Mammary epithelial cell (primary cell): ENCODE measurements at regions of chr4 and their contacts with region 1.

Region 1: DNA sequence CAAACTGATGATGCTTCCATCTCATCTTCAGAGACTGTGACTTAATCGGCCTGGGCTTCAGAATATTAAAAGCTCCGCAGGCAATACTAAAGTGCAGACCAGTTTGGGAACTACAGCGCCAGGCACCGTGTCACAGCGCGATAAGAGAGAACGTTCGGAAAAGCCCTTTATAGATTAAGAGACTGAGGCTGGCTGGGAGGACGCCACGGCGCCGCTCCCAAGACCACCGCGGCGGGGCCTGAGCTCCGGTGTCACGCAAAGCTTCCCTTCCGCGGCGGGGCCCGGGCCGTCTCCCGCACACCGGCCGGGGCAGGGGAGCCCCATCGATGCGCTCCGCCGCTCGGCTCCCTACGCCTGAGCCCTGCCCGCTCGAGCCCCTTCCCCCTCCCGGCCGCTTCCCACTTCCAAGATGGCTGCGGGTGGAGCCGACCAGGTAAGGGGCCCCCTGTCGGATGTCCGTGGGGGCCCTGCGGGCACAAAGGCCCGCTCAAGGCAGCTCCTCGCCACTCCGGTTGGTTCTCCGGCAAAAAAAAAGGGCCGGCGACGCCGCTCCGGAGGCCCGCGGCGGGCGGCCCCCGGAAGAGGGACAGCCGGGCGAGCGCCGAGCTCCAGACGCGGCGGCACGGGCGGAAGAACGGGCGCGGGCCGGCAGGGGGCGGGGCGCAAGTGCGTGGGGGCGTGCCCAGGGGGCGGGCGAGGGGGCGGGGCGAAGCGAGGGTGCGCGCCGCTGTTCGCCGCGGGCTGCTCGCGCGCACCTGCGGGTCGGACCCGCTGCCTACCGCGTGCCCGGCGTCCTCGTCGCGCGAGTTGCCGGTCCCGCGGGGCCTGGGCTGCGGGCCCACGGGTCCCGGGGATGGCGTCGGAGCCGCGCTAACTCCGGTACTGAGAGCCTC is at the start of gene TBC1D14:
- DNase-seq: peak; percentile 81
- H3K4me3 ChIP-seq: peak within 1 kb of the TSS; percentile 61 to 94 (median 77)
- H3K27ac ChIP-seq: peak within 1 kb of the TSS; percentile 89
- H3K4me1 ChIP-seq: peaks cover 18% of the 10 kb centered on the region
- H3K27me3 ChIP-seq: no peaks in the 10 kb centered on the region
- CTCF ChIP-seq: peak in 1 of 2 donors; percentile 27
- total RNA-seq, gene TBC1D14: 62.9 to 89.5 TPM

Region 2: DNA sequence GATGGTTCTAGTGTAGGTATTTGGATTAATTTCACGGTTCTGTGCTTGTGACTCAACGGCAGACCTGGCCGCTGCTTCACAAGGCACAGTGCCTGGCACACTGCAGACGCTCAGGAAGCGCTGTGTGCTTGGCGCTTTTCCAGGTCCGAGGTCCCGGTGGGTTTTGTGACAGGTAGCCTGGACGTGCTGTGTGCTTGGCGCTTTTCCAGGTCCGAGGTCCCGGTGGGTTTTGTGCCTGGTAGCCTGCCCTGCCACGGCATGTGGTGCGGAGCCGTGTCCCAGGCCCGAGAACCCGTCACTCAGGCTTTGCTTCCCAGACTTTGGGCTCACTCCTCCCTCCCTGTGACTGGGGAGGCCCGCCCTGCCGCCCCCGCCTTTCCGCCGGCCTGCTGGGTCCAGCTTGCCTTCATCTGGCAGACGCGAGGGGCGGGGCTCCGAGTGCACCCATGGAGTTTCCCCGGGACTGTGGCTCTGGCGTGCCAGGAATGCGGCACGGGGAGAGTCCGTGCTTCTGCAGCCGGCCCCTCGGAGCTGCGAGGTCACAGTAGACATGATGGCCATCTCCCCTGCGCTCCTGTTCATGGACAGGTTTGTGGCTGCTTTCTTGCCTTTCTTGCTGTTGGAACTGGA is 44.5 kb after region 1 on chr4:
- CTCF ChIA-PET with region 1: no interaction called
- dilution Hi-C with region 1: no loop called
- in situ Hi-C with region 1: no loop called
- intact Hi-C with region 1: loop called (anchors 2 kb)
- DNase-seq: peak; percentile 92
- H3K4me3 ChIP-seq: peak overlapping the region in 2 of 3 experiments; percentile 29 to 32
- H3K27ac ChIP-seq: peak overlapping the region; percentile 54
- H3K4me1 ChIP-seq: peaks cover 33% of the 10 kb centered on the region
- H3K27me3 ChIP-seq: no peaks in the 10 kb centered on the region
- CTCF ChIP-seq: no peak

Region 3: DNA sequence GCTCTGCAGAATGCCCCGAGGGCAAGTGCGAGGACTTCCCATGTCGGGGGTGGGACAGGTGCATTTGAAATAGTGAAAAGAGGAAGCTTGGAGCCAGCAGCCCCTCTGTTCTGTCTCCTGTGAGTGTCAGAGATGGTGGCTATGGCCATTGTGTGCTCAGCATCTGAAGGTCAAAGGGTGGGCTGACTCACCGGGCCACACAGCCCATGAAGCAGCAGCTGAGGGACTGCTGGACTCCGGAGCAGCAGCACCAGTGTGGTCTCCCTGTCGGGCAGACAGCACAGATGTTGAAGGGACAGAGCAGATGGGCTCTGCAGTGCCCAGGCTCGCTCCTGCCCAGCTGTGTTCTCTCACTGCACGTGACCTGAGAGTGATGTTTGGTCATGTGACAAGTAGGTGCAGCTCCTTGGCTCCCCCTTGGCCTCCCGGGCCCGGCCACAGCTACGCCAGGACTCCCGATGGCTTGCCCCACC is 53.9 kb after region 1 on chr4:
- CTCF ChIA-PET with region 1: no interaction called
- dilution Hi-C with region 1: loop called (anchors 5 kb)
- in situ Hi-C with region 1: no loop called
- intact Hi-C with region 1: no loop called
- DNase-seq: no peak
- H3K4me3 ChIP-seq: no peak overlapping the region
- H3K27ac ChIP-seq: no peak overlapping the region
- H3K4me1 ChIP-seq: no peaks in the 10 kb centered on the region
- H3K27me3 ChIP-seq: no peaks in the 10 kb centered on the region
- CTCF ChIP-seq: no peak

Region 4: GRCh38 chr4:6986781-6987587 is 77.7 kb after region 1 on chr4:
- CTCF ChIA-PET with region 1: no interaction called
- dilution Hi-C with region 1: no loop called
- in situ Hi-C with region 1: no loop called
- intact Hi-C with region 1: loop called (anchors 1 kb)
- DNase-seq: peak; percentile 93
- H3K4me3 ChIP-seq: peak overlapping the region; percentile 82 to 95 (median 95)
- H3K27ac ChIP-seq: peak overlapping the region; percentile 90
- H3K4me1 ChIP-seq: peaks cover 42% of the 10 kb centered on the region
- H3K27me3 ChIP-seq: no peaks in the 10 kb centered on the region
- CTCF ChIP-seq: peak in 1 of 2 donors; percentile 36

Region 5: DNA sequence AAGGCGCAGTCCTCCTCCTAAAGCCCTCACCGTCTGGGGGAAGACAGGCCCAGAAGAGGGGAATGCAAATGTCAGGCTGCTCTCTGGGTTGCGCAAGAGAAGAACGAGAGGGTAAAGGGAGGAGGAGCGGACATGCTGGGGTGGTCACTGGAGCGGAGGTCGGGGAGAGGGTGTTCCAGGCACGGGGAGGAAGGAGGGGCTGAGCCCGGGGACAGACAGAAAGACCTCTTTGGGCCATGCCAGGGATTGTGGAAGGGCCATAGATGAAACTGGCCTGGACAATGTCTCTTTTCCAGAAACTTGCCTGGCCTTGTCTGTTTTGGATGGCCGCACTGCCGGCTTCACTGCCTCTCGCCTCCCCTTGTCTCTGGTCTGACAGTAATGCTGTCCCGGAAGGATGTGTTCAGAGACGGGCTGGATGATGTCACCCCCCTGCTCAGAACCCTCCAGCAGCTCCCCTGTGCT is 404.1 kb after region 1 on chr4:
- CTCF ChIA-PET with region 1: no interaction called
- dilution Hi-C with region 1: loop called (anchors 10 kb)
- in situ Hi-C with region 1: no loop called
- intact Hi-C with region 1: no loop called
- DNase-seq: no peak
- H3K4me3 ChIP-seq: no peak overlapping the region
- H3K27ac ChIP-seq: no peak overlapping the region
- H3K4me1 ChIP-seq: no peaks in the 10 kb centered on the region
- H3K27me3 ChIP-seq: peaks cover 2% of the 10 kb centered on the region
- CTCF ChIP-seq: no peak